Activated CD8-positive, alpha-beta T cell treated with anti-CD3 and anti-CD28 coated beads for 36 hours (primary cell): ENCODE measurements at regions of chr6 and their contacts with region 1.

Region 1: DNA sequence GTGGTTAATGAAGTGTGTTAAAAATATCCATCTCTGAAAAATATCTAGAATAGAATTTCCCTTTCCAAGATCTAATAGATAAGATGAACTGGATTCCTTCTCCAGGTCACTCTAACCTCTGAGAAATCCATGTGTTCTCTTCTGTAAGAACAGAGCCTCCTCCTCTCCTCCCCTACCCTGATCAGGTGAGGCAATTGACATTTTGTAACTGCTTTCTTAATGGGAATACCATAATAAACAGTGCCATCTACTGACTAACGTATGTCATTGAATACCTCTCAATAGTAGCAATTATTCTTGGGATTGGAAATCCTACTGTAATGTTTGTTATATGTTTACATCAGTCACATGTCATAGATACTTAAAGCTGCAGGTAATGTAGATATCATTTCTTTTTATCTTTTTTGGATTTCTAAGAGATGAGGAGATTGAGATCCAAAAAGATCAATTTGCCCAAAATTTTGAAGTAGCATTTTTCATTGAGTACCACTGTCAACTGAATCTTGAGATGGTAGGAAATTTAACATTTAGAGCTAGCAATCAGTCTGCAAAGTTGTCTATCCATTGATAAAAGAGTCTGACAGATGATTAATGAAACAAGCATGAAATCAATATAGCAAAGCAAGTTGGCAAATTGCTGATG is 365.8 kb upstream of the HSF2 start:
- DNase-seq: no peak
- ATAC-seq: peak; percentile 74
- H3K4me3 Mint-ChIP-seq: no peak overlapping the region
- H3K27ac Mint-ChIP-seq: no peak overlapping the region
- H3K4me1 Mint-ChIP-seq: no peaks in the 10 kb centered on the region
- H3K27me3 Mint-ChIP-seq: peaks cover 2% of the 10 kb centered on the region
- CTCF ChIP-seq: peak; percentile 59

Region 2: GRCh38 chr6:121055572-121056163 is 978.0 kb before region 1 on chr6:
- CTCF ChIA-PET with region 1: interaction called, 3 read pairs
- POLR2A ChIA-PET with region 1: no interaction called
- intact Hi-C with region 1: loop called (anchors 10 kb)
- DNase-seq: no peak
- ATAC-seq: peak; percentile 56
- H3K4me3 Mint-ChIP-seq: no peak overlapping the region
- H3K27ac Mint-ChIP-seq: no peak overlapping the region
- H3K4me1 Mint-ChIP-seq: no peaks in the 10 kb centered on the region
- H3K27me3 Mint-ChIP-seq: no peaks in the 10 kb centered on the region
- CTCF ChIP-seq: peak; percentile 90

Region 3: GRCh38 chr6:121430514-121431460 is 602.9 kb before region 1 on chr6:
- CTCF ChIA-PET with region 1: no interaction called
- POLR2A ChIA-PET with region 1: no interaction called
- intact Hi-C with region 1: loop called (anchors 10 kb)
- DNase-seq: no peak
- ATAC-seq: no peak
- H3K4me3 Mint-ChIP-seq: no peak overlapping the region
- H3K27ac Mint-ChIP-seq: no peak overlapping the region
- H3K4me1 Mint-ChIP-seq: no peaks in the 10 kb centered on the region
- H3K27me3 Mint-ChIP-seq: peaks cover 7% of the 10 kb centered on the region
- CTCF ChIP-seq: no peak

Region 4: GRCh38 chr6:122187186-122187585 is 153.5 kb after region 1 on chr6:
- CTCF ChIA-PET with region 1: no interaction called
- POLR2A ChIA-PET with region 1: no interaction called
- intact Hi-C with region 1: no loop called
- DNase-seq: no peak
- ATAC-seq: no peak
- H3K4me3 Mint-ChIP-seq: no peak overlapping the region
- H3K27ac Mint-ChIP-seq: no peak overlapping the region
- H3K4me1 Mint-ChIP-seq: no peaks in the 10 kb centered on the region
- H3K27me3 Mint-ChIP-seq: peaks cover 2% of the 10 kb centered on the region
- CTCF ChIP-seq: no peak